Esophagus squamous epithelium (tissue), 5 donors: ENCODE measurements at regions of chr6 and their contacts with region 1.

Region 1: DNA sequence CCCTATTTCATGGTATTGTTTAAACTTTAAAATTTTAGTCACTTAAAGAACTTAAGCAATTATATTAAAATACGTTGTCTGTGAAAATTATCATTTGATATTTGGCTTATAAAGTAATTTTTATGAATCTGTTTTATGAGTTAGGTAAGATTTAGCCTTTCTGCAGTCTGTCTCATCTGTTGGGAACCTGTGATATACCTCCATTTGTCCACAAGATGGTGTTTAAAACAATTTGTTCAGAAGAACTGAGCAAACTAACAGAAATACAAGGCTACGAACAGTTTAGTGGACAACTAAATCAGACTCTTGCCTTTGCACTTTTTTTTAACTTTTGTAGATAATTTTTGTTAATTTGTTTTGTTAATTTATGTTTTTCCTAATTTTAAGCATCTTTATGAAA is 92.4 kb downstream of the COL9A1 start:
- DNase-seq: no peak
- H3K4me3 ChIP-seq: no peak overlapping the region
- H3K27ac ChIP-seq: no peak overlapping the region
- H3K4me1 ChIP-seq: no peaks in the 10 kb centered on the region
- H3K27me3 ChIP-seq: peaks cover 0 to 7% (median 0%) of the 10 kb centered on the region in 4 donors
- CTCF ChIP-seq: peak in 1 of 6 experiments; percentile 23
- POLR2A ChIP-seq: no peak

Region 2: DNA sequence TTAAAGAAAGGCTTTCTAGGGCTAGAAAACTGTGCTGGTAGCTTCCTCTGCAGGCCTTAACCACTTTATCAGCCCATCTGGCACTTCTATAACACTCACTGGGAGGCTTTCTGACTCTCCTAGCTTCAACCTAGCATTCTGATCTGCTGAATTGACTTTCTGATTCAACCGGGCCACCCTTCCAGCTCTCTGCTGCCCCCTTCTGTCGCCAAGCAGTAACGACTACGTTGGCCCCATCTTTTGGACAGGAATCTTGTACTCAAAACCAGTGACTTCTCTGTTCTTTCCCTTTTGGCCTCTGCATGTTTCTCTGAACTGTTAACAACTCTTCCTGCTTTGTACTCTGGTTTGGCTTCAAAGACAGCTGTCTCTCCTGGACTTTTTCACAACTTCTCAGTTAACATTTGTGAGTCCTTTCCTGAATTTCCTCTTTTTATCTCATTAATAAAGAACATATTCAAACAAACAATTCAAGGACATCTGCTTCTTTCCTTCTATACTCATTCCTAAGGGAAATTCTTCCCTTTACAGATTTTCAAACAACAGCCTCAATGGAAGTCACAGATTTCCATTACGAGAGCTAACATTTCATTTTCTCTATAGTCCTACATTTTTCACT is 159.0 kb after region 1 on chr6:
- intact Hi-C with region 1: loop called (anchors 10 kb)
- DNase-seq: no peak
- H3K4me3 ChIP-seq: no peak overlapping the region
- H3K27ac ChIP-seq: no peak overlapping the region
- H3K4me1 ChIP-seq: peaks cover 0 to 27% (median 4%) of the 10 kb centered on the region in 3 donors
- H3K27me3 ChIP-seq: peaks cover 0 to 2% (median 0%) of the 10 kb centered on the region in 4 donors
- CTCF ChIP-seq: peak; percentile 72 to 90 (median 88)
- POLR2A ChIP-seq: no peak